ENCODE measurements at regions of chr16 and their contacts with region 1.

Region 1: DNA sequence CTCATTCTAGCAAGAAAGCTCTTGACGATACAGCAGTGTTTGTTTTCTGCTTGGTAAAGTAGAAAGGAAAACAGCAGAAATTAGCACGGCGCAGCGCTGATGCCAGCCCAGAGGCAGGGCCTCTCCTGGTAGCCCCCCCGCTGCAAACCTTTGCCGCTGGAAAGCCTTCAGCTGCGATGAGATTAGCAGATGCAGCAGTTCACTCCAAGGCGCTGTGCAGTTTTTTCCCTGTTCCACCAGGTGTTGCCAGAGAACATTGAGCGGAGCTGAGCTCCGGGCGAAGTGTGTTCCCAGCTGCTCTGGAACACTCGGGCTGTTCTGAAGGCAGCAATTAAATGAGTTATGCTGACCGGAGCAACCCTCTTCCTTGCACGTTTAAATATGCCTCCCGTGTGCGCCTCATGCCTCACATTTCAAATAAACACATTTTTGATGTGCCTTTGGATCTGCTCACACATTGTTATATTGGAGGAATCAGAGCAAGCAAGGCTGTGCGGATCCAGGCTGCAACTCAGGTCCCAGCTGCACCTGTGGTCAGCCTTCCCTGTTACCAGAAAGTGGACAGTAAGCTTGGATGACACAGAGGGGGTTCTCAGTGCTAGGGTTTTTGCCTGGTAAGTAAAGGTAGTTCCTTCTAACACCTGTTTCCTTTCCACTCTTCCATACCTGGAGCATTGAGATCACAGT is 72.7 kb downstream of the RBFOX1 start:
- DNase-seq: peak; percentile 47 to 81 (median 66)
- ATAC-seq: peak; percentile 92 to 95 (median 94)
- H3K4me3 ChIP-seq: peak overlapping the region in 3 of 12 donors; percentile 11 to 27 (median 26)
- H3K27ac ChIP-seq: peak overlapping the region in 3 of 12 donors; percentile 8 to 56 (median 39)
- H3K4me1 ChIP-seq: peaks cover 0 to 21% (median 0%) of the 10 kb centered on the region in 12 donors
- H3K27me3 ChIP-seq: no peaks in the 10 kb centered on the region
- CTCF ChIP-seq: peak in 11 of 12 donors; percentile 21 to 62 (median 46)
- POLR2A ChIP-seq: no peak

Region 2: GRCh38 chr16:7086822-7087616 is 318.3 kb before region 1 on chr16:
- intact Hi-C with region 1: no loop called
- DNase-seq: peak; percentile 8 to 63 (median 48)
- ATAC-seq: peak in 3 of 4 donors; percentile 65 to 94 (median 83)
- H3K4me3 ChIP-seq: peak overlapping the region in 2 of 12 donors; percentile 6 to 11
- H3K27ac ChIP-seq: no peak overlapping the region
- H3K4me1 ChIP-seq: no peaks in the 10 kb centered on the region
- H3K27me3 ChIP-seq: peaks cover 0 to 66% (median 0%) of the 10 kb centered on the region in 9 donors
- CTCF ChIP-seq: peak in 11 of 12 donors; percentile 11 to 41 (median 27)
- POLR2A ChIP-seq: no peak

Region 3: GRCh38 chr16:7321661-7322060 is 83.6 kb before region 1 on chr16:
- intact Hi-C with region 1: loop called in 1 of 10 experiments (anchors 10 kb)
- DNase-seq: no peak
- ATAC-seq: peak in 1 of 4 donors; percentile 34
- H3K4me3 ChIP-seq: no peak overlapping the region
- H3K27ac ChIP-seq: no peak overlapping the region
- H3K4me1 ChIP-seq: no peaks in the 10 kb centered on the region
- H3K27me3 ChIP-seq: no peaks in the 10 kb centered on the region
- CTCF ChIP-seq: no peak
- POLR2A ChIP-seq: no peak

Region 4: DNA sequence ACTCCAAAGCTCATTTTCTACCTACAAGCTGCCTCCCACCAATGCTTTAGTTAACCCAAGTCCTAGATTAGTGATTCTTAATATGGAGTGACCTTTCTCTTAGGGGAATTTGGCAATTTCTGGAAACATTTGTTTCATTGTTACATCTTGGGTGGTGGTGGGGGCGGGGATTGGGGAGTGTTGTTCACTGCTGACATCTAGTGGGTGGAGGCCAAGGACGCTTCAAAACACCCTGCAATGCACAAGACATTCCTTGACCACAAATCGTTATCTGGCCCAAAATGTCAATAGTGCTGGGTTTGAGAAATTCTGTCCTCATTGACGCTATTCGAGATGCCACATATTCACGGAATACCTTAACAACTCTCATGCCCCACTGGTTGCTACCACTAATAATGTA is 210.3 kb after region 1 on chr16:
- intact Hi-C with region 1: loop called in 2 of 10 experiments (anchors 10 kb)
- DNase-seq: no peak
- ATAC-seq: no peak
- H3K4me3 ChIP-seq: no peak overlapping the region
- H3K27ac ChIP-seq: no peak overlapping the region
- H3K4me1 ChIP-seq: peaks cover 0 to 11% (median 0%) of the 10 kb centered on the region in 12 donors
- H3K27me3 ChIP-seq: no peaks in the 10 kb centered on the region
- CTCF ChIP-seq: peak in 2 of 12 donors; percentile 13 to 15
- POLR2A ChIP-seq: no peak

Measured in heart left ventricle (tissue), 16 donors.